Caco-2 (cell line): ENCODE measurements at regions of chr3 and their contacts with region 1.

Region 1: GRCh38 chr3:81005992-81006391 is 755.5 kb downstream of the GBE1 start:
- DNase-seq: peak in 1 of 2 experiments; percentile 25
- H3K4me3 ChIP-seq: no peak overlapping the region
- H3K4me3 Mint-ChIP-seq: no peak overlapping the region
- H3K27ac Mint-ChIP-seq: no peak overlapping the region
- H3K4me1 ChIP-seq: no peaks in the 10 kb centered on the region
- H3K4me1 Mint-ChIP-seq: no peaks in the 10 kb centered on the region
- H3K27me3 ChIP-seq: no peaks in the 10 kb centered on the region
- H3K27me3 Mint-ChIP-seq: no peaks in the 10 kb centered on the region
- CTCF ChIP-seq: peak in 1 of 2 experiments; percentile 28

Region 2: GRCh38 chr3:81105789-81106488 is 99.9 kb after region 1 on chr3:
- CTCF ChIA-PET with region 1: no interaction called
- POLR2A ChIA-PET with region 1: no interaction called
- intact Hi-C with region 1: loop called (anchors 10 kb)
- DNase-seq: no peak
- H3K4me3 ChIP-seq: no peak overlapping the region
- H3K4me3 Mint-ChIP-seq: no peak overlapping the region
- H3K27ac Mint-ChIP-seq: no peak overlapping the region
- H3K4me1 ChIP-seq: no peaks in the 10 kb centered on the region; the same call in 1 of the 2 replicates
- H3K4me1 Mint-ChIP-seq: no peaks in the 10 kb centered on the region
- H3K27me3 ChIP-seq: no peaks in the 10 kb centered on the region
- H3K27me3 Mint-ChIP-seq: no peaks in the 10 kb centered on the region
- CTCF ChIP-seq: no peak